B cell (primary cell): ENCODE measurements at regions of chr22 and their contacts with region 1.

Region 1: DNA sequence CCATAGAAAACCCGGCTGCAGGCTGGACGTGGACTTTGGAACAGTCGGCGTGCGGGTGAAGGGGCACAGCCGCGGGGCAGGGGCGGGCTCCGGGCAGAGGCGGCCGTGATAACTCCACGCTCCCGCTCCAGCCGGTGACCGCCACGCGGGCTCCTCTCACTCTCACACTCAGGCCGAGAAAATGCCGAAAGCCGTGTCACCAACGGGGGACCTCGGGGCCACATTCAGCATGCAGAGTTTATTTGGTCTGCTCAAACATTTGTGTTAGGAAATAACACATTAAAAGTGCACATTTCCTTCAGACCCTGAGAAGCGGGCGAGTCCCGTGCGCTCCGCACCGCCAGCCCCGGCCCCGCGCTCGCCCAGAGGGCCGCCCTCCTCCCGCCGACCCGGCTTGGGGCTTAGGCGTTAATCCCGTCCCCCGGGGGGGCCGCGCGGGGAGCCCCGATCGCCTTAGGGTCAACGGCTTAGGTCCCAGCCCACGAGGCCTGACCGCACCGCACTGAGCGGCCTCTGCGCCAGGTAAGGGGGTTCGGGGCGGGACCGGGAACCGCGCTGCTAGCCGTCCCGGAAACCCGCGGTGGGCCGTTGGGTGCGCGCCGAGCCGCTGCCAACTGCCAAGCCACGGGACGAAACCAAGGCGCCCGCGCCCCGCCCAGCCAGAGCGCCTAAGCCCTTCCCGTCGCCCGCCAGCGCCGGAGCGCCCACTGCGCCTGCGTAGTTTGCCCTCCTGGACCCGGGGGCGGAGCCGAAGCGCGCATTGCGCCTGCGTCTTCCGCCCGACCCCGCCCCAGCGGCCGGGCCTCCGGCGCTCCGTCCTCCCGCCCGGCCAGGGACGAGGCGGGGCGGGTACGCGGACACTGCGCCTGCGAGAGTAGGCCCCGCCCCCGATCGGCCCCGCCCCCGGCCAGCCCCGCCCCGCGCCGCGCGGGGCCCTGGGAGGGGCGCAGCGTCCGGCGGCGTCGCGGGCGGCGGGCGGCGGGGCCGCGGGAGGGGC is at the start of gene ZBED4:
- DNase-seq: peak; percentile 99
- ATAC-seq: peak; percentile 88
- H3K4me3 ChIP-seq: peak within 1 kb of the TSS; percentile 66 to 81 (median 77)
- H3K4me3 Mint-ChIP-seq: peak within 1 kb of the TSS; percentile 87
- H3K27ac ChIP-seq: peak within 1 kb of the TSS; percentile 73 to 90
- H3K27ac Mint-ChIP-seq: peak within 1 kb of the TSS; percentile 93
- H3K4me1 ChIP-seq: peaks cover 31 to 44% of the 10 kb centered on the region in 2 donors
- H3K4me1 Mint-ChIP-seq: peaks cover 43% of the 10 kb centered on the region
- H3K27me3 ChIP-seq: peaks cover 0 to 25% (median 14%) of the 10 kb centered on the region in 4 experiments
- H3K27me3 Mint-ChIP-seq: peaks cover 16% of the 10 kb centered on the region
- CTCF ChIP-seq: no peak
- total RNA-seq, gene ZBED4: 14.6 and 14.7 TPM in 2 replicates

Region 2: DNA sequence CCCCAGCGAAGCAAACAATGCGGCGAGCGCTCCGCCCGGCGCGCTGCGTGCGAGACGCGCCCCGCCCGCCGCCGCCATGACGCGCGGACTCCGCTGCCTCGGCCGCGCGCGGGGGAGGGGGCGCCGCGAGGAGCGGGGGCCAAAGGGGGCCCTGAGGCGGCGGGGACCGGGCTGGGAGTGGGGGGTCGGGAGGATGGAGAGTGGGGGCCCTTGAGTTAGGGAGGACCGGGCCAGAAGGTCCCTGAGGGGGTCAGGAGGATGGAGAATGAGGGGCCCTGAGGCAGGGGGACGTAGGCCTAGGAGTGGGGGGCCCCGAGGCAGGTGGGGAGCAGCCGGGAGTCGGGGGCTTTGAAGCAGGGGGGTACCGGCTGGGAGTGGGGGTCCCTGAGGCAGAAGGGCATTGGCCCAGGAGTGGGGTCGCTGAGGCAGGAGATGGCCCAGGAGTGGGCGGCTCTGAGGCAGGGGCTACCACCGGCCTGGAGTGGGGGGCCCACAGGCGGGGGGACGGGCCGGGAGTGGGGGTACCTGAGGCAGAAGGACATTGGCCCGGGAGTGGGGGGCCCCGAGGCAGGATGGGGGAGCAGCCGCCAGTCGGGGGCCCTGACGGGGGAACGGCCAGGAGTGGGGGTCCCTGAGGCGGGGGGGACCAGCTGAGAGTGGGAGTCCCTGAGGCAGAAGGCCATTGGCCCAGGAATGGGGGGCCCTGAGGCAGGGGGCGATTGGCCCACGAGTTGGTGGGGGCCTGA is 25.2 kb before region 1 on chr22 and contains the start of gene BRD1:
- CTCF ChIA-PET with region 1: no interaction called
- POLR2A ChIA-PET with region 1: no interaction called
- intact Hi-C with region 1: loop called (anchors 1 kb)
- DNase-seq: peak; percentile 76
- ATAC-seq: peak; percentile 76
- H3K4me3 ChIP-seq: peak within 1 kb of the TSS; percentile 41 to 68 (median 66)
- H3K4me3 Mint-ChIP-seq: peak within 1 kb of the TSS; percentile 87
- H3K27ac ChIP-seq: peak within 1 kb of the TSS; percentile 66 to 81
- H3K27ac Mint-ChIP-seq: peak within 1 kb of the TSS; percentile 85
- H3K4me1 ChIP-seq: peaks cover 43 to 51% of the 10 kb centered on the region in 2 donors
- H3K4me1 Mint-ChIP-seq: peaks cover 44% of the 10 kb centered on the region
- H3K27me3 ChIP-seq: peaks cover 0 to 5% (median 0%) of the 10 kb centered on the region in 4 experiments
- H3K27me3 Mint-ChIP-seq: no peaks in the 10 kb centered on the region
- CTCF ChIP-seq: no peak
- total RNA-seq, gene BRD1: 73.3 and 77.8 TPM in 2 replicates

Region 3: DNA sequence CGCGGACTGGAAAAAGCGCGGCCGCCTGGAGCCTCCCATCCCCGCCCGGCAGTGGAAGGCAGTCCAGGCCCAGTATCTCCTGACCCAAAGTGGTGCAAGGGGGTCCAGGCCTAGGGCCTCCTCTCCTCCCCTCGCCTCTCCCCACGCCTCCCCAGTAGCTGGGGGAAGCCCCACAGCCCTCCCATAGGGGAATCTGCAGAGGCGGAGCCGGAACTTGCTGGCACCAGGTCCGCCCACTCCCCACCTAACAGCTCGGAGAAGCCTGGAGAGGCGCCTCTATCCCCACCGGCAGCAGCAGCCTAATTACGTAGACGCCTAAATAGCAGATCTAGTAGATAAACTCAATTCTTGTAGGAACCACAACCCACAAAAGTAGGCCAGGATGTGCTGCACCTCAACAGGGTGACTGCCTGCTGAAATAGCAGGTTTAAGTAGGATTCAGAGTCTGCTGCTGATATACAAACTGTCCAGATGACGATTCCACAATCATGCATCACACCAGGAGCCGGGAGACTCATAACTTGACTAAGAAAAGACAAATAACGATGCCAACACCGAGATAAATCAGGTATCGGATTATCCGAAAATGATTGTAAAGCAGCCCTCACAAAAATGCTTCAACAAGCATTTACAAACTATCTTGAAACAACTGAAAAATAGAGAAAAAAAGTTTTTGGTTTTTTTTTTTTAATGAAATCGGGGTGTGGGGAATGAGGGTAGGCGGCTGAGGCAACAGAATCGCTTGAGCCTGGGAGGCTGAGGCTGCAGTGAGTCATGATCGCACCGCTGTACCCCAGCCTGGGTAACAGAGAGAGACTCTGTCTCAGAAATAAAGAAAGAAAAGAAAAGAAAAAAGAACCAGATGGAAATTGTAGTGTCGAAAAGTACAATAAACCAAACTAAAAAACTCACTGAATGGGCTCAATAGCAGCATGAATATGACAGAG is 14.2 kb before region 1 on chr22:
- CTCF ChIA-PET with region 1: no interaction called
- POLR2A ChIA-PET with region 1: no interaction called
- intact Hi-C with region 1: loop called (anchors 1 kb)
- DNase-seq: peak; percentile 65
- ATAC-seq: peak; percentile 97
- H3K4me3 ChIP-seq: peak overlapping the region in 4 of 5 experiments; percentile 41 to 52 (median 48)
- H3K4me3 Mint-ChIP-seq: peak overlapping the region; percentile 74
- H3K27ac ChIP-seq: peak overlapping the region; percentile 43 to 51
- H3K27ac Mint-ChIP-seq: peak overlapping the region; percentile 61
- H3K4me1 ChIP-seq: peaks cover 3 to 9% of the 10 kb centered on the region in 2 donors
- H3K4me1 Mint-ChIP-seq: peaks cover 11% of the 10 kb centered on the region
- H3K27me3 ChIP-seq: peaks cover 0 to 4% (median 0%) of the 10 kb centered on the region in 4 experiments
- H3K27me3 Mint-ChIP-seq: peaks cover 4% of the 10 kb centered on the region
- CTCF ChIP-seq: no peak

Region 4: DNA sequence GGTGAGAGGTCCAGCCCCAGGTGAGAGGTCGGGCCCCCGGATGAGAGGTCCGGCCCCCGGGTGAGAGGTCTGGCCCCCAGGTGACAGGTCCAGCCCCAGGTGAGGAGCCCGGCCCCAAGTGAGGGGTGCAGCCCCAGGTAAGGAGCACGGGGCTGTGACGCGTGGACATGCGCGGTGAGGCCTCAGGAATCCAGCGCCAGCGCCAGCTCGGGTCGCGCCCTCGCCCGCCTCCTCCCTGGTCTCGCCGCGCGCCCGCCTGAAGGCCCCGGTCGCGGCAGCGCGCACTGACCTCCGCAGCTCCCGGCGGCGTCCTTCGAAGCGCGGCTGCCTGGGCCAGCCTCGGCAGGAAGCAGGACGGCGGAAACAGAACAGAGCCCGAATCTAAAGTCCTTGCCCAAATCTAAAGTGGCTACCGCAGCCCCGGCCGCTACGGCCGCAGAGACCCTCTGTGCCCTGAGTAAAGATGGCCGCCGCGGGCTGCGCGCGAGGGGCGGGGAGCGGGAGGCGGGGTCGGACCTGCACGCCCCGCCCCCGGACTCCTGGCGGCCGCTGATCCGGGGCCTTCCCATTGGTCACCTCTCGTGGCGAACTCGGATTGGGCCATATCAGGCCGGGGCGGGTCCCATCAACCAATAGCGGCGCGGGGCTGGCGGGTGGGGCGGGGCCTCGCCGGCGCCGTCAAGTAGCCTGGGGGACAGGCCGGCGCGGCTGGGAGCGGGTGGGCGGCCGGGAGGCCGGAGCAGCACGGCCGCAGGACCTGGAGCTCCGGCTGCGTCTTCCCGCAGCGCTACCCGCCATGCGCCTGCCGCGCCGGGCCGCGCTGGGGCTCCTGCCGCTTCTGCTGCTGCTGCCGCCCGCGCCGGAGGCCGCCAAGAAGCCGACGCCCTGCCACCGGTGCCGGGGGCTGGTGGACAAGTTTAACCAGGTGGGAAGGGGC is 65.0 kb after region 1 on chr22 and contains the starts of genes ALG12 and CRELD2:
- CTCF ChIA-PET with region 1: no interaction called
- POLR2A ChIA-PET with region 1: no interaction called
- intact Hi-C with region 1: loop called (anchors 1 kb)
- DNase-seq: peak; percentile 97
- ATAC-seq: peak; percentile 98
- H3K4me3 ChIP-seq: peak within 1 kb of the TSS; percentile 34 to 76 (median 73)
- H3K4me3 Mint-ChIP-seq: peak within 1 kb of the TSS; percentile 86
- H3K27ac ChIP-seq: peak within 1 kb of the TSS; percentile 64 to 83
- H3K27ac Mint-ChIP-seq: peak within 1 kb of the TSS; percentile 87
- H3K4me1 ChIP-seq: peaks cover 20 to 26% of the 10 kb centered on the region in 2 donors
- H3K4me1 Mint-ChIP-seq: peaks cover 22% of the 10 kb centered on the region
- H3K27me3 ChIP-seq: no peaks in the 10 kb centered on the region
- H3K27me3 Mint-ChIP-seq: no peaks in the 10 kb centered on the region
- CTCF ChIP-seq: no peak
- total RNA-seq, gene ALG12: 16.6 and 17.2 TPM in 2 replicates
- total RNA-seq, gene CRELD2: 32.8 and 35.9 TPM in 2 replicates